Naive thymus-derived CD4-positive, alpha-beta T cell (primary cell): ENCODE measurements at regions of chrX and their contacts with region 1.

Region 1: GRCh38 chrX:109709129-109709631 is 23.9 kb downstream of the ACSL4 start:
- DNase-seq: no peak
- ATAC-seq: peak; percentile 61
- H3K4me3 ChIP-seq: no peak overlapping the region
- H3K4me3 Mint-ChIP-seq: peak overlapping the region in 7 of 10 donors; percentile 2 to 82 (median 47)
- H3K27ac ChIP-seq: no peak overlapping the region
- H3K27ac Mint-ChIP-seq: peak overlapping the region in 1 of 9 donors; percentile 88
- H3K4me1 ChIP-seq: peaks cover 0 to 20% of the 10 kb centered on the region in 2 donors
- H3K4me1 Mint-ChIP-seq: peaks cover 12 to 63% (median 52%) of the 10 kb centered on the region in 7 donors
- H3K27me3 ChIP-seq: no peaks in the 10 kb centered on the region
- H3K27me3 Mint-ChIP-seq: no peaks in the 10 kb centered on the region

Region 2: DNA sequence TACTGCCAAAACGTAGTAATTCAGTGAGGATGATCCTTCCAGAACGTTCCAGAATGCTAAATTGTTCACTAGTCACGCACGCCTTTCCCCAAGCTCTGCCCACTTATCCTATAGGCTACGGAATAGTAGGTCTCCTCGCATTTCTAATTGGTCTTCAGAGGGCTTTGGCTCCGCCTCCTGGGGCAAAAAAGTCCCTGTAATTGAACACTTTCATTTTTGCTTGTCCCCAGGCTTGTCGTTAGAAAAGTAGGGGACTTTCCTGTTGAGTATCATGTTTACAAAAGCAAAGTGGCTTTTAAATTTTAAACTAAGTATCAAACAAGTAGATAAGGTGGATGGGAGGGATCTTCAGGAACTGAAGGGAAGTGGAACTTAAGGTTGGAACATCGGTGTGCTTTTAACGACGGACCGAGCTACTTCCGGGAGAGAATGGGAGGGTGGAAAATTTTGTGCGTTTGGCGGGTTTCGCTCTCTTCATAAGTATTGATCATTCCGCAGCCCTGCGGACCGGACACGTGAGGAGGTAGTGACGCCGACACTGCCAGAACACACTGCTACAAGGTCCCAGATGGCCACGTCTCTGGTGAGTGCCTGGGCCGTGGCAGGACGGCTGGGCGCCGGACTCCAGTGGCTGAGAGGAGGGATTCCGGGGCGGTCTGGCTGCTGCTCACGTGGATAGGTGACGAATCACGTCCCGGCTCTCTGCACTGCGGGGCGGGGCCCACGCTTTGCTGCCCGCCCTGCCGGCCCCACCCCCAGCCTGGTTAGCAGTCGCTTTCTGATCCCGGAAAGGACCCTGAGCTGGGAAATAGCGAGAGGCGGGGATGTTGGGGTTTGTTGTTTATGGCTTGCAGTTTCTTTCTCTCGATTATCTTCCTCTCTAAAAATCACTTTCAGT is 172.5 kb before region 1 on chrX and contains the start of gene NXT2:
- CTCF ChIA-PET with region 1: no interaction called
- POLR2A ChIA-PET with region 1: no interaction called
- intact Hi-C with region 1: loop called in 1 of 2 experiments (anchors 10 kb)
- DNase-seq: peak; percentile 64 to 89 (median 83)
- ATAC-seq: peak; percentile 100
- H3K4me3 ChIP-seq: peak within 1 kb of the TSS; percentile 87
- H3K4me3 Mint-ChIP-seq: peak within 1 kb of the TSS; percentile 79 to 98 (median 95)
- H3K27ac ChIP-seq: peak within 1 kb of the TSS; percentile 87
- H3K27ac Mint-ChIP-seq: peak within 1 kb of the TSS; percentile 92 to 99 (median 98)
- H3K4me1 ChIP-seq: peaks cover 0 to 3% of the 10 kb centered on the region in 2 donors
- H3K4me1 Mint-ChIP-seq: peaks cover 0 to 14% (median 8%) of the 10 kb centered on the region in 7 donors
- H3K27me3 ChIP-seq: no peaks in the 10 kb centered on the region
- H3K27me3 Mint-ChIP-seq: peaks cover 0 to 19% (median 12%) of the 10 kb centered on the region in 5 donors
- total RNA-seq, gene NXT2: 5.7 to 13.5 (median 7.7) TPM

Region 3: DNA sequence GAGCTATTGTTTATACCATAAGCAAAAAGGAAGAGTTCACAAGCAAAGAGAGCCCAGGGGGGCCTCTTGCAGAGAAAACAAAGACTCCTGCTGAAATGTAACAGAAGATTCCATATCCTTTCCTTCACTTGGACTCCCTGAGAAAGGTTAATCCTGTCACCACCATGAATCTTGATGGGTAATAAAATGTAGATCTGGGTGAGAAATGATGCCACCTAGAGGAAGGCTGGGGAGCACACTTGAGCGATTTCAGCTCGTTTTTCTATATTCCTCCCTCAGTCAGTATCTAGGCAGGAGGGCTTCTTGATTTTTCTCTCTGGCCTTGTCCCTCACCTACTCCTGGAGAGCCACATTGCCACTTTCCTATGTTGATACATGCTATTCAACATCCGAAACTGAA is 74.0 kb before region 1 on chrX:
- CTCF ChIA-PET with region 1: no interaction called
- POLR2A ChIA-PET with region 1: no interaction called
- intact Hi-C with region 1: loop called in 1 of 2 experiments (anchors 10 kb)
- DNase-seq: no peak
- ATAC-seq: no peak
- H3K4me3 ChIP-seq: no peak overlapping the region
- H3K4me3 Mint-ChIP-seq: no peak overlapping the region
- H3K27ac ChIP-seq: no peak overlapping the region
- H3K27ac Mint-ChIP-seq: no peak overlapping the region
- H3K4me1 ChIP-seq: no peaks in the 10 kb centered on the region
- H3K4me1 Mint-ChIP-seq: peaks cover 0 to 26% (median 5%) of the 10 kb centered on the region in 7 donors
- H3K27me3 ChIP-seq: no peaks in the 10 kb centered on the region
- H3K27me3 Mint-ChIP-seq: no peaks in the 10 kb centered on the region

Region 4: DNA sequence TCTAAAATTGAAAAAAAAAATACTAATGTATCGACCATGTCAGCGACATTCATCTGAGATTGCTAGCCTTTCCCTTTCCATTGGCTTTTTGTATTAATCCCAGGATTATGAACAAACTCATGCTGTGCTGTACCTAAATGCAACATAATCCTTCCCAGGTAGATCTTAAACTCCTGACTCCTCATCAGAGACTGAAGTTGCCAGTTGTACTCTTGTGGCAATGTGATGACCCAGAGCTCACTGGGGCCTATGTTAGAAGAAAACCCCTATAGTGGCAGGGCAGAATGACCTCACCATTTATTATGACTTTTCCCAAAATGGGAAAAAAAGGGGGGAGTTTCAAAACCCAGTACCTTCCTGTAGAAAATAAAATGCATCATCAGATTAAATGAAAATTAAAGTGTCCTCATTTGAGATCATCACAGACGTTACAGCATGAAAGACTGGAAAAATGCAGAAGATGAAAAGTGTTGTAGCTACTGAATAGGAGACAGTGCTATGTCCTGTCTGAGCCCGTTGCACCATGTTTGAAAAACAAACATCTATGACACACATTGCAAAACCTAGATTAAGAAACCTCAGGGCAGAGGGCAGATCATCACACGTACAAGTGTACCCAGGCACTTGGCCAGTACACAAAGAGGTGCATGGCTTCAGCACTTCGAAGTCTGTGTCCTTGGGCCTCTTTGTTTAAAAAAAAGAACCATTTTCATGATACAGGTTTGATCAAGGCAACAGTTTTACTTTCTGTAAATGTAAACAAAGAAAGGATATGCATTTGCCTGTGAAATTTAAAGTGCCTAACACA is 30.6 kb after region 1 on chrX:
- CTCF ChIA-PET with region 1: no interaction called
- POLR2A ChIA-PET with region 1: no interaction called
- intact Hi-C with region 1: no loop called
- DNase-seq: no peak
- ATAC-seq: peak; percentile 71
- H3K4me3 ChIP-seq: no peak overlapping the region
- H3K4me3 Mint-ChIP-seq: no peak overlapping the region
- H3K27ac ChIP-seq: no peak overlapping the region
- H3K27ac Mint-ChIP-seq: peak overlapping the region in 1 of 9 donors; percentile 17
- H3K4me1 ChIP-seq: no peaks in the 10 kb centered on the region
- H3K4me1 Mint-ChIP-seq: peaks cover 0 to 4% (median 0%) of the 10 kb centered on the region in 7 donors
- H3K27me3 ChIP-seq: no peaks in the 10 kb centered on the region
- H3K27me3 Mint-ChIP-seq: no peaks in the 10 kb centered on the region

Region 5: GRCh38 chrX:109797311-109797975 is 88.3 kb after region 1 on chrX:
- CTCF ChIA-PET with region 1: no interaction called
- POLR2A ChIA-PET with region 1: no interaction called
- intact Hi-C with region 1: no loop called
- DNase-seq: no peak
- ATAC-seq: no peak
- H3K4me3 ChIP-seq: no peak overlapping the region
- H3K4me3 Mint-ChIP-seq: no peak overlapping the region
- H3K27ac ChIP-seq: no peak overlapping the region
- H3K27ac Mint-ChIP-seq: no peak overlapping the region
- H3K4me1 ChIP-seq: no peaks in the 10 kb centered on the region
- H3K4me1 Mint-ChIP-seq: peaks cover 0 to 3% (median 0%) of the 10 kb centered on the region in 7 donors
- H3K27me3 ChIP-seq: no peaks in the 10 kb centered on the region
- H3K27me3 Mint-ChIP-seq: peaks cover 0 to 4% (median 0%) of the 10 kb centered on the region in 5 donors

Region 6: GRCh38 chrX:109856974-109857373 is 147.8 kb after region 1 on chrX:
- CTCF ChIA-PET with region 1: interaction called, 31 read pairs
- POLR2A ChIA-PET with region 1: no interaction called
- intact Hi-C with region 1: loop called in 1 of 2 experiments (anchors 1 kb)
- DNase-seq: peak in 6 of 9 donors; percentile 7 to 47 (median 42)
- ATAC-seq: no peak
- H3K4me3 ChIP-seq: no peak overlapping the region
- H3K4me3 Mint-ChIP-seq: peak overlapping the region in 1 of 10 donors; percentile 2
- H3K27ac ChIP-seq: no peak overlapping the region
- H3K27ac Mint-ChIP-seq: no peak overlapping the region
- H3K4me1 ChIP-seq: no peaks in the 10 kb centered on the region
- H3K4me1 Mint-ChIP-seq: peaks cover 0 to 2% (median 0%) of the 10 kb centered on the region in 7 donors
- H3K27me3 ChIP-seq: no peaks in the 10 kb centered on the region
- H3K27me3 Mint-ChIP-seq: no peaks in the 10 kb centered on the region

Region 7: DNA sequence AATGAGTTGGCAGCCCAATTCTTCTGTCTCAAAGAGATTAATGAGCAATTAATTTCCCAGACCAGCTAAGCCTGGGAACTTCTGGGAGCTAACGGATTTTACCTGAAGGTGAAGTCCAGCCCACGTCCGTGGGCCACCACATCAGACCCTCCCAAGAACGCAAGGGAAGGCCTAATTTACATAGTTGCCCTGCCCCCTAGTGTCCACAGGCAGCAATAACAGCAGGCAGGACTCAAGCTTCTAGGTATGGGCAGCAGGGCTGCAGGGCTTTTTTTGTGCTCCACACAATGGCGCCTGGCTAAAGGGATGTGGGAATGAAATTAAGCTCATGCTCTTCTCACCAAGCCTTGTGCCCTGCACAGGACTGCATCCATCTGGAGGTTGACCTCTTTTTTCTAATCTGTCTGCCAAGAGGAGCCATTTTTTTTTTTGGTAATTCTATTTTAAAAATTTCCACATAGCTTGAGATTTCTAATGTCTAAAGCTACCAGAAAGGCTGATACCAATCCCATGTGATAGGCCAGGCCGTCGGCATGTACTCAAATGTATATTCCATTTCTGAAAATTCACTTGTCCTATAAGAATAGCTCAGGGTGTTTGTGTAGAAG is 181.8 kb after region 1 on chrX:
- CTCF ChIA-PET with region 1: interaction called, 14 read pairs
- POLR2A ChIA-PET with region 1: no interaction called
- intact Hi-C with region 1: loop called (anchors 1 kb)
- DNase-seq: peak in 8 of 9 donors; percentile 11 to 48 (median 40)
- ATAC-seq: peak; percentile 74
- H3K4me3 ChIP-seq: no peak overlapping the region
- H3K4me3 Mint-ChIP-seq: no peak overlapping the region
- H3K27ac ChIP-seq: no peak overlapping the region
- H3K27ac Mint-ChIP-seq: no peak overlapping the region
- H3K4me1 ChIP-seq: no peaks in the 10 kb centered on the region
- H3K4me1 Mint-ChIP-seq: peaks cover 0 to 1% (median 0%) of the 10 kb centered on the region in 7 donors
- H3K27me3 ChIP-seq: no peaks in the 10 kb centered on the region
- H3K27me3 Mint-ChIP-seq: peaks cover 0 to 6% (median 0%) of the 10 kb centered on the region in 5 donors